PC-3 (cell line): ENCODE measurements at regions of chr13 and their contacts with region 1.

Region 1: DNA sequence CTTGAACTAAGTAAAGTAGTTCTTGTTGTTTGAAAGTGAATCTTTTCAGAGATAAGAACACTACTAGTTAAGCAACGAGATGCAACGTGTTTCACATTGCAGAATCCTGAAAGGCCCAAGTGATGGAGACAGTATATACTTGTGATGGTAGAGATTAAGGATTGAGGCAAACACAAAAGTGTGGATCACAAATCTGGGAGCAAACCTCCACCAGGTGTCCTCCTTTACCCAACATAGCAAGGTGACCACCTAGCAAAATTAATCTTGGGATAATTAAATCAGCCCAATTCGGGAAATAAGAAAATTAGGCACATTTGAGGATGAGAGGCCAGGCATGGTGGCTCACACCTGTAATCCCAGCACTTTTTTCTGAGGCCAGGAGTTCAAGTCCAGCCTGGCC is 563.9 kb downstream of the DACH1 start:
- DNase-seq: no peak
- ATAC-seq: peak; percentile 43; the same call in 1 of the 2 replicates
- H3K4me3 ChIP-seq: no peak overlapping the region
- H3K27ac ChIP-seq: no peak overlapping the region
- H3K4me1 ChIP-seq: no peaks in the 10 kb centered on the region
- H3K27me3 ChIP-seq: no peaks in the 10 kb centered on the region
- CTCF ChIP-seq: peak; percentile 24; the same call in 1 of the 2 replicates

Region 2: GRCh38 chr13:71240911-71241310 is 62.2 kb before region 1 on chr13:
- CTCF ChIA-PET with region 1: interaction called, 3 read pairs
- POLR2A ChIA-PET with region 1: no interaction called
- intact Hi-C with region 1: loop called (anchors 2 kb)
- DNase-seq: peak; percentile 35
- ATAC-seq: peak; percentile 86
- H3K4me3 ChIP-seq: no peak overlapping the region
- H3K27ac ChIP-seq: no peak overlapping the region
- H3K4me1 ChIP-seq: no peaks in the 10 kb centered on the region
- H3K27me3 ChIP-seq: no peaks in the 10 kb centered on the region
- CTCF ChIP-seq: peak; percentile 63